Ascending aorta (tissue), 2 donors: ENCODE measurements at regions of chr1 and their contacts with region 1.

Region 1: GRCh38 chr1:151399890-151400495 is 620 bp downstream of the PSMB4 start:
- DNase-seq: no peak
- H3K4me3 ChIP-seq: peak overlapping the region; percentile 95 to 98
- H3K27ac ChIP-seq: peak overlapping the region; percentile 95
- H3K4me1 ChIP-seq: peaks cover 6 to 12% of the 10 kb centered on the region in 2 donors
- H3K27me3 ChIP-seq: no peaks in the 10 kb centered on the region
- CTCF ChIP-seq: no peak

Region 2: DNA sequence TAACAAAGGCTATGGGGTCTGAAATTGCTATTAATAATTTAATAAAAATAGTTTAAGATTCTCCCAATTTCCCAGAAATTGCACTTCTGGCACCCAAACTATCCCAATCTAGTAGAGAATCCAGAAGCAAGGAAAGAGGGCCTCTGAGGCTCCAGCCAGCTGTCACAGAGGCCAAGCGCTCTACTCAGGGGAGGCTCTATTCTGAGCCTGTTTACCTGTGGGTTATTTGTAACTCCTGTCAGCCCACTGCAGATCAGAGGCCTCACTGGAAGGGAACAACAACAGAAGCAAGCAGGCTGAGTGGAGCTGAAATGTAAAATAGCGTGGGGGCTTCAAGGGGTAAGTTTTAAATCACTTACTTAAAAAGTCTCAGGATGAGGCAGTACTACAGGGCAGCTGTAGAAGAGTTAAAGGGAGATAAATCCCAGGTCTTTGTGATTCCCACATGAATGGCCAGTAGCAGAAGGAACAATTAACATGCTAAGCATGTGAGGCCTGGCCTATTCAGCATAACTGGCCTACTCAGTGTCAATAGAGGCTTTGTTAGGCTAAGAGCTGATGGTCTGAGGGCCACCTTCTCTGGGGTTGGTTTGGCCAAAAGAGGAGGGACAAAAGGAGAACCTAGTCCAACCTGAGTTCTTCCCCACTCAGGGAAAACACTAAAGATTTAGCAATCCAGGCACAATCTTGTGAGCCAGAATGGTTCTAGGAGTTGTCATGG is 105.1 kb before region 1 on chr1:
- intact Hi-C with region 1: loop called (anchors 5 kb)
- DNase-seq: no peak
- H3K4me3 ChIP-seq: no peak overlapping the region
- H3K27ac ChIP-seq: no peak overlapping the region
- H3K4me1 ChIP-seq: no peaks in the 10 kb centered on the region
- H3K27me3 ChIP-seq: no peaks in the 10 kb centered on the region
- CTCF ChIP-seq: no peak

Region 3: DNA sequence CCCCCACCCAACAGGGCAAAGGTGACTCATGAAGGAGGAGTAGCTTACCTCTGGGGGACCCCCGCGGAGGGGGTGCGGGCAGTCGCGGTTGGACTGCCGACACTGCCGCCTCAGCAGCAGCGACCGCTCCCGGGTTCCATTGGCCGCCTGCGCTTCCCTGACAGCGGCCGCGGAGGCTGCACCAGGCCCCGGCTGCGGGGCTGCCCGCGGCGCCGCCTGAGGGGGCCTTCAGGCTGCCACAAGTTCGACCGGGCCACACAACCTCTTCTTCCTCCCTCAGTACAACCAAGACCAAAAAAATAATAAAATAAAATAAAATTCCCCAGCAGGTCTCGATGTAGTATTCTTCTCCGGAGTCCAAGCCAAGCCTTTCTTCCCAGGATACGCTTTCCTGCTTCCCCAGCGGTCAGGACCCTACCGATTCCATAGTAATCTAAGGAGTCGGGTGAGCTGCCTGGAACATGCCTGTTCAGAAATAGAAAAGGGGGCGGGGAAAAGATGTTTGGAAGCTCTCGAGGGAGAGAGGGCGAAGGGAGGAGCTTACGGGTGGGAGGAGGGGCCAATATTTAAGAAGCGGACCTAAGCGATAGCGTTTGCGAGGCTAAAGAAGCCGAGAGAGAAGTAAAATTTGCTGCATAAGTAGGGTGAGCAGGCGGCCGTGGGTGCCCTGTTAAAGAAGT is 72.6 kb before region 1 on chr1 and contains the start of gene PI4KB:
- intact Hi-C with region 1: loop called (anchors 5 kb)
- DNase-seq: peak; percentile 72 to 97
- H3K4me3 ChIP-seq: peak within 1 kb of the TSS; percentile 62 to 74
- H3K27ac ChIP-seq: peak within 1 kb of the TSS; percentile 92 to 93
- H3K4me1 ChIP-seq: peaks cover 0 to 22% of the 10 kb centered on the region in 2 donors
- H3K27me3 ChIP-seq: no peaks in the 10 kb centered on the region
- CTCF ChIP-seq: no peak
- total RNA-seq, gene PI4KB: 94.8 TPM

Region 4: GRCh38 chr1:151346769-151347522 is 53.0 kb before region 1 on chr1 and contains the start of gene RFX5:
- intact Hi-C with region 1: loop called (anchors 1 kb)
- DNase-seq: peak; percentile 92 to 98
- H3K4me3 ChIP-seq: peak within 1 kb of the TSS; percentile 66 to 73
- H3K27ac ChIP-seq: peak within 1 kb of the TSS; percentile 83 to 90
- H3K4me1 ChIP-seq: peaks cover 0 to 9% of the 10 kb centered on the region in 2 donors
- H3K27me3 ChIP-seq: no peaks in the 10 kb centered on the region
- CTCF ChIP-seq: no peak
- total RNA-seq, gene RFX5: 8.4 TPM

Region 5: DNA sequence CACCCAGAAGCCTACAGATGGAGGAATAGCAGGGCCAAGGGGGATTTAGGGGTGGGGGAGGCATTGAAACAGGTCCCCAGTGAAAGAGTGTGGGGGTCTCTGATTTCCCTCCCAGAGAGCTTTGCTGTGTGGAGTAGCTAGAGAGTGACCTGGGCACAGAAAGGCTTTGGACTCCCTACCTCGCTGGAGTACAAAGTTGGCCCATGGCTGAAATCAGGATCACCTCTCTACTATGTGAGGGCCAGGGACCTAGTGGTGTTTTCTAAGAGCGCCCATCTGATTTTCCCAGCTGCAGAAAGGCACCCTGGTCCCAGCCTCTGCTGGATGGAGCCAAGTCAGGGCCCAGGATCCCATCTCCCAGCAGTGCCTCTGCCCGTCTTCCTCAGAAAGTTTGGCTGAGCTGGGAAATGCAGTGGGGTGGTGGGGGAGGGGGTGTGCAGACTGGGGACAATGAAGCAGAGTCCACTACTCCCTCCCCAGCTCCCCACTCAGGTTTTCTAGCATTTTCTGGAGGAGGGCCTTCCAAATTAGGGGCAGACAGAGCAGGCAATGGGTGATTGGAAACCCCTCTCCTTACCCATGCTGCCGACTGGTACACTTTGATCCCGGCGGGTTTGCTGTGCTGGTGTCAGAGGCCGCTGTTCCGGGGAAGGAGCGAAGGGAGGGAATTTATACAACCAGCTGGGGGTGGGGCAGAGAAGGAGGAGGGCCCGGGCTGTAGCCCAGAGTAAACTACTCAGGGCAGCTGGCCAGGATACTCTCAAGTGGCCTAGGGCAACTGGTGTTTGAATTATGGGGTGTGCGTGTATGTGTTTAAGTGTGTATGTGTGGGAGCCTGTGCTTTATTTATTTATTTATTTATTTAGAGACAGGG is 27.7 kb before region 1 on chr1 and contains the start of gene SELENBP1:
- intact Hi-C with region 1: loop called (anchors 1 kb)
- DNase-seq: peak in 1 of 2 donors; percentile 89
- H3K4me3 ChIP-seq: peak within 1 kb of the TSS; percentile 48 to 63
- H3K27ac ChIP-seq: peak within 1 kb of the TSS; percentile 71 to 79
- H3K4me1 ChIP-seq: peaks cover 15 to 34% of the 10 kb centered on the region in 2 donors
- H3K27me3 ChIP-seq: no peaks in the 10 kb centered on the region
- CTCF ChIP-seq: no peak
- total RNA-seq, gene SELENBP1: 102 TPM